MCF 10A (cell line): ENCODE measurements at regions of chr1 and their contacts with region 1.

Region 1: GRCh38 chr1:110495926-110496600 is 22.9 kb downstream of the KCNA10 start:
- DNase-seq: peak; percentile 77
- H3K4me3 Mint-ChIP-seq: no peak overlapping the region
- H3K27ac Mint-ChIP-seq: no peak overlapping the region
- H3K4me1 Mint-ChIP-seq: no peaks in the 10 kb centered on the region
- H3K27me3 Mint-ChIP-seq: no peaks in the 10 kb centered on the region
- CTCF ChIP-seq: peak; percentile 92

Region 2: DNA sequence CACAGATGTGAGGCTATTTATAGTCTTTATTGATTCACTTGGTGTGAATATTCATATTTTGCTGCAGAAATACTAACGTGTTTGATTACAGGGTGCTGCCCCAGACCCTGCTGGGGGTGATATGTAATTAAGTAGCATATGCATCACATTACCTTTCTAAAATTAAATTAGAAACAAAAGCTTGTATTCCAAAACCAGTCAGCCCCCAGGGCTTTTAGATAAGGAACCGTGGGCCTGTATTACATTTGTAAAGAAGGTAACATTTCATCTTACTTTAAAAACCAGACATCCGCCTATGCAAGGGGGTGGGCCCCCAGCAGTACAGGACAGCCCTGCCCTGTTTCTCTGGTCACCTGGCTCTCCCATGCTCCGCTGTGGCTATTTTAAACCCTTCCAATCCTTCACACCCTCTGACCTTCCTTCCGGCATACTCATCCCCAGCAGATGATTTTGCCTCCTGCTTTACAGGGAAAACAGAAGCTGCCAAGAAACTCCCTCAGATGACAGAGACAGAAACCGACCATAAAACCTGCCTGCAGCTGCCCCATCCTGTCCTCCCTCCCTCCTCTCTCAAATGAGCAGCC is 307.9 kb before region 1 on chr1:
- CTCF ChIA-PET with region 1: interaction called, 12 read pairs
- POLR2A ChIA-PET with region 1: no interaction called
- intact Hi-C with region 1: no loop called
- DNase-seq: peak; percentile 45
- H3K4me3 Mint-ChIP-seq: no peak overlapping the region
- H3K27ac Mint-ChIP-seq: no peak overlapping the region
- H3K4me1 Mint-ChIP-seq: peaks cover 6% of the 10 kb centered on the region
- H3K27me3 Mint-ChIP-seq: peaks cover 34% of the 10 kb centered on the region
- CTCF ChIP-seq: no peak

Region 3: GRCh38 chr1:110209715-110210603 is 286.1 kb before region 1 on chr1 and contains the start of gene KCNC4:
- CTCF ChIA-PET with region 1: interaction called, 74 read pairs
- POLR2A ChIA-PET with region 1: no interaction called
- intact Hi-C with region 1: no loop called
- DNase-seq: peak; percentile 56
- H3K4me3 Mint-ChIP-seq: peak within 1 kb of the TSS; percentile 72
- H3K27ac Mint-ChIP-seq: no peak within 1 kb of the TSS
- H3K4me1 Mint-ChIP-seq: peaks cover 5% of the 10 kb centered on the region
- H3K27me3 Mint-ChIP-seq: no peaks in the 10 kb centered on the region
- CTCF ChIP-seq: no peak
- total RNA-seq, gene KCNC4: 1.1 and 1.3 TPM in 2 replicates

Region 4: GRCh38 chr1:110407260-110408210 is 88.5 kb before region 1 on chr1 and contains the start of gene LAMTOR5:
- CTCF ChIA-PET with region 1: interaction called, 157 read pairs
- POLR2A ChIA-PET with region 1: interaction called, 7 read pairs
- intact Hi-C with region 1: loop called (anchors 1 kb)
- DNase-seq: peak; percentile 90
- H3K4me3 Mint-ChIP-seq: peak within 1 kb of the TSS; percentile 100
- H3K27ac Mint-ChIP-seq: peak within 1 kb of the TSS; percentile 100
- H3K4me1 Mint-ChIP-seq: peaks cover 9% of the 10 kb centered on the region
- H3K27me3 Mint-ChIP-seq: no peaks in the 10 kb centered on the region
- CTCF ChIP-seq: no peak
- total RNA-seq, gene LAMTOR5: 111 and 127 TPM in 2 replicates

Region 5: GRCh38 chr1:110460253-110461220 is 35.5 kb before region 1 on chr1:
- CTCF ChIA-PET with region 1: interaction called, 273 read pairs
- POLR2A ChIA-PET with region 1: interaction called, 6 read pairs
- intact Hi-C with region 1: loop called (anchors 2 kb)
- DNase-seq: peak; percentile 86
- H3K4me3 Mint-ChIP-seq: no peak overlapping the region
- H3K27ac Mint-ChIP-seq: no peak overlapping the region
- H3K4me1 Mint-ChIP-seq: peaks cover 11% of the 10 kb centered on the region
- H3K27me3 Mint-ChIP-seq: no peaks in the 10 kb centered on the region
- CTCF ChIP-seq: peak; percentile 97

Region 6: GRCh38 chr1:110508038-110508940 is 12.2 kb after region 1 on chr1:
- CTCF ChIA-PET with region 1: interaction called, 35 read pairs
- POLR2A ChIA-PET with region 1: no interaction called
- intact Hi-C with region 1: no loop called
- DNase-seq: no peak
- H3K4me3 Mint-ChIP-seq: no peak overlapping the region
- H3K27ac Mint-ChIP-seq: no peak overlapping the region
- H3K4me1 Mint-ChIP-seq: peaks cover 1% of the 10 kb centered on the region
- H3K27me3 Mint-ChIP-seq: peaks cover 19% of the 10 kb centered on the region
- CTCF ChIP-seq: no peak

Region 7: DNA sequence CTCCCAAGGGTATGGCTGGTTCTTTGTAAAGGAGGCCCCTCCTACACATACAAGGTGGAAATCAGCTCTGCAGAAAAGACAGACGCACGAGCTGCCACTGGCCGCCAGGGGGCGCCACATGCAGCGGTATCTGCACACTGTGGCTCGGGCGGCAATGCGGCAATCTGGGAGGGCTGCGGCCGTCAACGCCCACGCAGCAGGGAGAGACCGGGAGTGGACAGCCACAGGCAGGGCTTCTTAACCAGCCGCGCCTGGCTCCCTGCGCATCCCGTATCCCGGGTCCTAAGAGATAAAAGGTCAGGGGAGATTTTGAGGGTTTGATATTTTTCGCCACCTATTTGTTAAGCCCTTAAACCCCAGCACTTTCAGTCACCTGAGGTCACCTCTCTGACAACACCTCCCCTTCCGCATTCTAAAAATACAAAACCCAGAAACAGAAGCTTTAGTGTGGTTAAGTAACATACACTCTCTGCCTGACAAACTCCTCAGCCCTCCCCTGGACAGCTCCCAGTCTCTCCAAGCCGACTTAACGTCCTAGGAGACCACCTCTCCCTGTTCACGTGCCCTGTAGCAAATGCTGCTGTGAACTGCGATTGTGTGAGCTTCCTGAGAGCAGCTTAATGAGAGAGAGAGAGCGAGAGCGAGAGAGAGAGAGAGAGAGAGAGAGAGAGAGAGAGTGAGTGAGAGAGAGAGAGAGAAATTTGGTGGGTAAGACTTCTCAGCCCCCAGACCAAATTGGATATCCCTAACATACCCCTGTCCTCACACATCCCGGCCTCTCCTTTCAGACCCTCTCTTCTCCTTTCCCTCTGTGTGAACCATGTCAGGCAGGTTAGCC is 123.6 kb after region 1 on chr1:
- CTCF ChIA-PET with region 1: interaction called, 23 read pairs
- POLR2A ChIA-PET with region 1: no interaction called
- intact Hi-C with region 1: no loop called
- DNase-seq: peak; percentile 81
- H3K4me3 Mint-ChIP-seq: no peak overlapping the region
- H3K27ac Mint-ChIP-seq: no peak overlapping the region
- H3K4me1 Mint-ChIP-seq: peaks cover 6% of the 10 kb centered on the region
- H3K27me3 Mint-ChIP-seq: peaks cover 74% of the 10 kb centered on the region
- CTCF ChIP-seq: peak; percentile 94